Heart left ventricle (tissue), 16 donors: ENCODE measurements at regions of chr3 and their contacts with region 1.

Region 1: DNA sequence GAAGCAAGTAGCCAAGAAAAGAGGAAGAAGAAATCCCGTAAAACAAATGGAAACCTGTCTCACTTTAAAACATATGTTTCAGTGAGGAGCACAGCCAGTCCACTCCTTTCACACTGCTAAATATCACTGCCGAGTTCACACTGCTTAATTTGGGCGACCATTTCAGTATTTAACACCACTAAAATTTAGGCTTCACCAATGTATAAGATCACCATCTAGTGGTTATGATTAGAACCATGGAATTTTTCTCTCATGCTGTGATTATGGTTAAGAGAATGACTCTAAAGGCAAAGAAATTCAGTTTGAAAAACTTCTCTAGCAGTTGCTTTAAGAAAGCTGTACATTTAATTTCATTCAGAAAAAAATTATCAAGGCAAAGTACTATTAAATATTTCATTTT is 16.6 kb downstream of the SLC4A7 start:
- DNase-seq: no peak
- ATAC-seq: peak in 2 of 4 donors; percentile 68 to 70
- H3K4me3 ChIP-seq: no peak overlapping the region
- H3K27ac ChIP-seq: no peak overlapping the region
- H3K4me1 ChIP-seq: peaks cover 0 to 22% (median 6%) of the 10 kb centered on the region in 12 donors
- H3K27me3 ChIP-seq: no peaks in the 10 kb centered on the region
- CTCF ChIP-seq: peak; percentile 24 to 64 (median 42)
- POLR2A ChIP-seq: no peak

Region 2: GRCh38 chr3:27521179-27521871 is 53.8 kb after region 1 on chr3:
- intact Hi-C with region 1: loop called in 1 of 10 experiments (anchors 1 kb)
- DNase-seq: peak in 3 of 5 donors; percentile 19 to 49 (median 41)
- ATAC-seq: peak; percentile 69 to 96 (median 88)
- H3K4me3 ChIP-seq: no peak overlapping the region
- H3K27ac ChIP-seq: peak overlapping the region in 11 of 12 donors; percentile 6 to 63 (median 45)
- H3K4me1 ChIP-seq: peaks cover 0 to 35% (median 12%) of the 10 kb centered on the region in 12 donors
- H3K27me3 ChIP-seq: no peaks in the 10 kb centered on the region
- CTCF ChIP-seq: no peak
- POLR2A ChIP-seq: no peak

Region 3: DNA sequence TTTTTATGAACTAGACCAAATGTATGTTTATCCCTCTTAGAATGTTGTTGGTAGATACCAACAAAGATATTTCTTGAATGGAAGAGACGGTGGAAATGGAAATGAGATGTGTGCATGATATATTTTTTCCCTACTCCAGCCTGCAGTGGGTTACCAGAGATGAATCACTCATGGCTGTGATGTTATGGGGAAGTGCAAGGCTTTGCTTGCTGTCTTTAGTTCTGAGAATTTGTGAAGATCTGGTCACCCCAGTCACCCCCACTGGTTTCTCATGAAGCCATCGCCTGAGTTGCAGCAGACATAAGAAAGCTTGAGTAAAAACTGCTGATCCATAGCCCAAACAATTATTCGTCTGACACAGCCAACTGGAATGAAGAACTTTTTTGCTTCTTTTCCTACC is 332.7 kb after region 1 on chr3:
- intact Hi-C with region 1: no loop called
- DNase-seq: no peak
- ATAC-seq: no peak
- H3K4me3 ChIP-seq: no peak overlapping the region
- H3K27ac ChIP-seq: no peak overlapping the region
- H3K4me1 ChIP-seq: no peaks in the 10 kb centered on the region
- H3K27me3 ChIP-seq: peaks cover 0 to 6% (median 0%) of the 10 kb centered on the region in 9 donors
- CTCF ChIP-seq: no peak
- POLR2A ChIP-seq: no peak